ENCODE measurements at regions of chr10 and their contacts with region 1.

Region 1: DNA sequence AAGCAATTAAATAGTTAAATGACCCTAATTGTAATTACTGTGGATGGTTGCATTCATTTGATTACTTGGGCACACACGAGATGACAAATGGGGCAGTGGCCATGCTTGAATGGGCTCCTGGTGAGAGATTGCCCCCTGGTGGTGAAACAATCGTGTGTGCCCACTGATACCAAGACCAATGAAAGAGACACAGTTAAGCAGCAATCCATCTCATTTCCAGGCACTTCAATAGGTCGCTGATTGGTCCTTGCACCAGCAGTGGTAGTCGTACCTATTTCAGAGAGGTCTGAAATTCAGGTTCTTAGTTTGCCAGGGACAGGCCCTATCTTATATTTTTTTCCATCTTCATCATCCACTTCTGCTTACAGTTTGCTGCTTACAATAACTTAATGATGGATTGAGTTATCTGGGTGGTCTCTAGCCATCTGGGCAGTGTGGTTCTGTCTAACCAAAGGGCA is 8.3 kb downstream of the PCBD1 start:
- DNase-seq: peak; percentile 81
- H3K4me3 ChIP-seq: no peak overlapping the region
- H3K27ac ChIP-seq: no peak overlapping the region
- H3K4me1 ChIP-seq: no peaks in the 10 kb centered on the region
- CTCF ChIP-seq: peak; percentile 96

Region 2: DNA sequence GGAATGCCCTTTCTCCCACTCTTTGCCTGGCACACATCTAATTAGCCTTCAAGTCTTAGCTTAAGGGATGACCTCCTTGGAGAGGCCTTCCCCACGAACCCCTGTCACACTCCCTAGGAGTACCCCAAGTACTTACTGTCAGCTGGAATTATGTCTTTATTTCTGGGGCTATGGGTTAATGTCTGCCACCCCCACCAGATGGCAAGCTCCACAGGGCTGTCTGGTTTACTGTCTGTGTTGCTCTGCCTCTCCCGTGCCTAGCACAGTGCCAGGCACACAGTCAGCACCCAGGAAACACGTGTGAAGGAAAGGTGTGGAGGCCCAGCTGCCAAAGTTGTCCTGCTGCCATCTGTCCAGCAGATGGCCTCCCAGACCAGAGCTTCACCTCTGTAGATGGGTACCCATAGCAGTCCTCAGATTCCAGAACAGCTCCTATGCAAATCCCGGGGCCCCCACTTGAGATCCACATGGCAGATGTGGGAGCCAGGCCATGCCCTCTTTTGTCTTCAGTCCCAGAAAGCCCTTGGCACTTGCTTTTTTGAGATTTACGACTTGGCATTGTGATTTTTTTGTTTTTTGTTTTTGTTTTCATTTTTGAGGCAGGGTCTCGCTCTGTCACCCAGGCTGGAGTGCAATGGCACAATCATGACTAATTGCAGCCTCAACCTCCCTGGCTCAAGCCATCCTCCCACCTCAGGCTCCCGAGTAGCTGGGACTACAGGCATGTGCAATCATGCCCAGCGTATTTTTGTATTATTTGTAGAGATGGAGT is 418.7 kb before region 1 on chr10:
- CTCF ChIA-PET with region 1: no interaction called
- POLR2A ChIA-PET with region 1: no interaction called
- intact Hi-C with region 1: loop called (anchors 1 kb)
- DNase-seq: peak; percentile 74
- H3K4me3 ChIP-seq: no peak overlapping the region
- H3K27ac ChIP-seq: no peak overlapping the region
- H3K4me1 ChIP-seq: no peaks in the 10 kb centered on the region
- CTCF ChIP-seq: peak; percentile 92

Region 3: GRCh38 chr10:70549962-70550458 is 330.1 kb before region 1 on chr10:
- CTCF ChIA-PET with region 1: no interaction called
- POLR2A ChIA-PET with region 1: no interaction called
- intact Hi-C with region 1: loop called (anchors 1 kb)
- DNase-seq: peak; percentile 75
- H3K4me3 ChIP-seq: no peak overlapping the region
- H3K27ac ChIP-seq: no peak overlapping the region
- H3K4me1 ChIP-seq: peaks cover 4% of the 10 kb centered on the region
- CTCF ChIP-seq: peak; percentile 93

Region 4: GRCh38 chr10:70815504-70816219 is 64.4 kb before region 1 on chr10 and contains the start of gene SGPL1:
- CTCF ChIA-PET with region 1: no interaction called
- POLR2A ChIA-PET with region 1: interaction called, 3 read pairs
- intact Hi-C with region 1: loop called (anchors 1 kb)
- DNase-seq: peak; percentile 90
- H3K4me3 ChIP-seq: peak within 1 kb of the TSS; percentile 78
- H3K27ac ChIP-seq: no peak within 1 kb of the TSS
- H3K4me1 ChIP-seq: peaks cover 4% of the 10 kb centered on the region
- CTCF ChIP-seq: peak; percentile 92
- total RNA-seq, gene SGPL1: 11.7 and 14.2 TPM in 2 replicates

Measured in OCI-LY7 (cell line).